ENCODE measurements at regions of chr12 and their contacts with region 1.

Region 1: GRCh38 chr12:18148961-18149360 is 59.0 kb upstream of the RERGL start:
- DNase-seq: no peak
- H3K4me3 ChIP-seq: no peak overlapping the region
- H3K27ac ChIP-seq: no peak overlapping the region
- H3K27me3 ChIP-seq: no peaks in the 10 kb centered on the region
- CTCF ChIP-seq: no peak

Region 2: DNA sequence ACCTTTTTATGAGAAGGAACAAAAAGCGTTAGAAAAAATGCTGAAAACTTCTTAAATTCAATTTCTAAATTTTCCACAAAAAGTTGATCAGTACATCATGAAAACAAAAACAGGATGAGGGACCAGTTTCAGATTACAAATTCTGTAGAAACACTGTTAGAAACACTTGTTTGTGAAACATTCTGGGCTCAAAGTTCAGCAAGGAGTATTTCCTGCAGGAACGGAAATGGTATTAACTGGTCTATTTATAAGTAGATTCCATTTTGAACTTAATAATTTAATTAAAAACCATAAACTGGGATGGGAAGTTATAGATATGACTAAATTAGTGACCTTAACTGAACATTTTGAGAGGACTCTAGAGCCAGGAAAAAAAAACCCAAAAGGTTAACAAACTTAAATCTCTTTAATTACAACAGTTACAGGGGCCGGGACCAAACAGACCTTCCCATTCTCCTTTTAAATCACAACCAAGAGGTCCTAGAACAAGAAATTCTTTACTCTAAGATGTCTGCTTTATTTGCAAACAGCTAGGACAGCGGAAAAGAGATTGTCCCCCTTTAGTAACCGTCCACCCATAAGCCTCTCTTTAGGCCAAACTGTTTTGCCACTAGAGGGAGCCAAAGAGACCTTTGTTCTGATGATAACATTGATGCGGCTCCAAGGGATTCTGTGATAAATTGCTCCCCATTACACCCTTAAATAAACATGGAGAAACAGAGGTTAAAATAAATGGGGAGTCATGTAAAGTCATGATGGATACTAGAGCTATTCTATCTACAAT is 10.0 kb after region 1 on chr12:
- CTCF ChIA-PET with region 1: interaction called, 18 read pairs
- POLR2A ChIA-PET with region 1: no interaction called
- DNase-seq: no peak
- H3K4me3 ChIP-seq: no peak overlapping the region
- H3K27ac ChIP-seq: no peak overlapping the region
- H3K27me3 ChIP-seq: no peaks in the 10 kb centered on the region
- CTCF ChIP-seq: peak; percentile 89